Pancreas (tissue), 10 donors: ENCODE measurements at regions of chr3 and their contacts with region 1.

Region 1: DNA sequence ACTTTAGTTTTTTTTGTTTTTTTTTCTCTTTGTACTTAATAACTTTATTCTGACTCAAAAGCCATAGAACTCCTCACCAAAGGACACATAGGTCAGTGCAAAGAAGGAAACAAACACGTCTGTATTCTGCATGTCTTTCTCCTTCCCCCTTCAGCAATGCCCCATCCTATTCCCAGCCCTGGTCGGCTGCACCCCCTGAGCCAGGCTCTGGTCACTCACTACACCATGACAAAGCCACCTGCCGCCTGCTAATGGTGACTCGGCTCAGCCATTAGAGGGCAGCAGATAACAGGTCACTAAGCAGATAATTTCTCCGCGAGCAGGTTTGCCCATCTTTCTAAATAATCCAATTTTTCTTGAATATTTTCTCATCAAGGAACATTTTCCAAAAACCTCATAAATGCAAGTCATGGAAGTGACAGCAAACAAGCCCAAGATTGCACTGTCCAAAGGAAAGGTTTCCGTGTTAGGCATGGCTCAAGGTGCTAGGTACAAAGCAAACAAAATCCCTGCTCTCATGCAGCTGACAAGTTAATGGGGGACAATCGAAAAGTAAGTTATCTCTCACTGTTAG is 37.8 kb downstream of the TM4SF4 start:
- DNase-seq: peak; percentile 53 to 79 (median 67)
- ATAC-seq: peak; percentile 81 to 93 (median 86)
- H3K4me3 ChIP-seq: no peak overlapping the region
- H3K27ac ChIP-seq: no peak overlapping the region
- H3K4me1 ChIP-seq: peaks cover 4 to 13% (median 11%) of the 10 kb centered on the region in 3 donors
- H3K27me3 ChIP-seq: no peaks in the 10 kb centered on the region
- CTCF ChIP-seq: peak; percentile 52 to 70 (median 64)

Region 2: GRCh38 chr3:149717391-149718056 is 205.2 kb after region 1 on chr3:
- intact Hi-C with region 1: loop called in 1 of 3 experiments (anchors 10 kb)
- DNase-seq: peak in 3 of 6 donors; percentile 20 to 56 (median 28)
- ATAC-seq: peak; percentile 60 to 90 (median 88)
- H3K4me3 ChIP-seq: peak overlapping the region in 1 of 4 donors; percentile 19
- H3K27ac ChIP-seq: no peak overlapping the region
- H3K4me1 ChIP-seq: peaks cover 0 to 3% (median 0%) of the 10 kb centered on the region in 3 donors
- H3K27me3 ChIP-seq: no peaks in the 10 kb centered on the region
- CTCF ChIP-seq: peak; percentile 34 to 70 (median 56)